Head of caudate nucleus (tissue), 42 donors: ENCODE measurements at regions of chr20 and their contacts with region 1.

Region 1: DNA sequence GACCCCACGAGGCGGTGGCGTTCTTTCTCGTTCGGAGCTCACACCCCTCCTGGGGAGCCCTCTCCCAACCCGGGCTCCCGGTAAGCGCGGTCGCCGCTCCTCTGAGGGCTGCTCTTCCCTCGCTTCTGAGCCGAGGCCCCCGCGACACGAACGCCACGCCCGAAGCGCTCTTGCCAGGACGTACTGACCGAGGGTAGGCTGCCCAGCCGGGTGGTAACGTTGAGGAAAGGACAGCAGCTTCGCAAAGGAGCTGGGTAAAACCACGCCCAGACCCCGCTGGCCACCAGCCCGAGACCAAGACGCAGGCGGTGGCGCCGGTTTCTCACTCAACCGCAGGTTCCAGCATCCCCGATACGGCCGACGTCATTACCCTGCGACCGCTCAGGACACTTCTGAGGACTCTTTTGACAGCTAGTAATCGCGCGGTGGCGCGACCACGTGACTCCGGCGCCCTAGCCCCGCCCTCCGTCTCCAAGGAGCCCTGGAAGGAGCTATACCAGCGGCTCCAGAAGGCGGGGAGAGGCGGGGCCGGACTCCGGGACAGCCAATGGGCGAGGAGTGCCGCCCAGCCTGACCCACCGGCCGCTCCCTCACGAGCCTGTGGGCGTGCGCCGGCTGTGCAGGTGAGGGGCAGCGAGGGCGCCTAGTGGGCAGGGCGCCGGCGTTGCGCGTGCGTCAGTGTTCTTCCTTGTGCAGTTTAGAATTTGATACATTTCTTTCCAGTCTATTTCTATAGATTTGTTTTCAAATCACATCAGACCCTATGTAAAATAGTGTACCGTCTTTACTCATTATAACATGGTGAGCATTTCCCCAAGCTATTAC is 4.0 kb upstream of the GZF1 start:
- DNase-seq: peak; percentile 98 to 100 (median 100)

Region 2: GRCh38 chr20:23420943-23421931 is 63.3 kb after region 1 on chr20 and contains the start of gene NAPB:
- intact Hi-C with region 1: loop called (anchors 5 kb)
- DNase-seq: peak; percentile 91 to 99 (median 97)

Region 3: DNA sequence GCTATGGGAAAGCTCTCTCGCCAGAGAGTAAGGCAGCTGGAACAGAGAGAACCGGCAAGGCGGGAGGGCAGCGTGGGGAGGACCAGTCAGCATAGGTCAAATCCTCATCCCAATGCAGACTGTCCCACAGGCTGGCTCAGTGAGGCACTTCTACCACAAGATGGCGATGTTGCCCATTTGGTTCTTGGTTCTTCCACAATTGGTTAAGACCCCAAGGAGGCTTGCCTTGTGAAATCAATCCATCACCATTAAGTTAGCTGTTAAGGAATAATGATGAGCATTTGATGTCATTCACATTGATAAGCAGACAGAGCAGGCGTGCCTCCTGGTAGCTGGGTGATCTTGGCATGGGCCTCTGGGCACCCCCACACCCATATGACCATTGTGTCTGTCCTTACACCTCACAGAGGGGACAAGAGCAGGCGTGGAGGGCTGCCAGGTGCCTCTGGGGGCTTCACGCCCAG is 83.9 kb after region 1 on chr20:
- intact Hi-C with region 1: no loop called
- DNase-seq: peak; percentile 45 to 89 (median 78)